ENCODE measurements at regions of chr12 and their contacts with region 1.

Region 1: DNA sequence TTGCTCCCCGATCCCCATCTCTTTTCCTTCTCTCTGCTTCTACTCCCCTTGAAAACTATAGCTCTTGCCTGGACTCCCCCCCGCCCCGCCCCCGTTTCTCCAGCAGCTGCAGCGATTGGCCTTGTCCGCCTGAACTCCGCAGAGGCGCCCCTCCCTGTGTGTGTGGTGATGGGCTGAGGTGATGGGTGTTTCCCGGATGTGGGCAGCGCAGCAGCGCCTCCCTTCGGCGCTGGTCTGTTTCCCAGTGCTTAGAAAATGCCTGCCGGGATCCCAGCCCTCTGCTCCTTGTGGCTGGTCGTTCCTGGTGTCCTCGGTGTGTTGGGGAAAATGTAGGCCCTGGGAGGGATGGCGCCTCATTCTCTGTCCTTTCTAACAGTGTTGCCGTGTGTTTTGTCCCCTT is 43.3 kb downstream of the GALNT8 start:
- DNase-seq: peak in 1 of 14 experiments; percentile 28
- ATAC-seq: no peak
- H3K4me3 ChIP-seq: no peak overlapping the region
- H3K4me3 Mint-ChIP-seq: no peak overlapping the region
- H3K27ac ChIP-seq: no peak overlapping the region
- H3K27ac Mint-ChIP-seq: no peak overlapping the region
- H3K4me1 ChIP-seq: no peaks in the 10 kb centered on the region
- H3K4me1 Mint-ChIP-seq: no peaks in the 10 kb centered on the region
- H3K27me3 ChIP-seq: no peaks in the 10 kb centered on the region
- H3K27me3 Mint-ChIP-seq: no peaks in the 10 kb centered on the region
- CTCF ChIP-seq: no peak

Region 2: GRCh38 chr12:4579305-4580102 is 184.0 kb before region 1 on chr12:
- CTCF ChIA-PET with region 1: no interaction called
- POLR2A ChIA-PET with region 1: no interaction called
- intact Hi-C with region 1: loop called in 1 of 2 experiments (anchors 2 kb)
- DNase-seq: peak in 4 of 14 experiments; percentile 6 to 39 (median 23)
- ATAC-seq: no peak
- H3K4me3 ChIP-seq: no peak overlapping the region
- H3K4me3 Mint-ChIP-seq: no peak overlapping the region
- H3K27ac ChIP-seq: no peak overlapping the region
- H3K27ac Mint-ChIP-seq: no peak overlapping the region
- H3K4me1 ChIP-seq: no peaks in the 10 kb centered on the region
- H3K4me1 Mint-ChIP-seq: no peaks in the 10 kb centered on the region
- H3K27me3 ChIP-seq: peaks cover 0 to 6% of the 10 kb centered on the region in 2 experiments
- H3K27me3 Mint-ChIP-seq: no peaks in the 10 kb centered on the region
- CTCF ChIP-seq: peak; percentile 4

Region 3: GRCh38 chr12:4604684-4605193 is 158.8 kb before region 1 on chr12:
- CTCF ChIA-PET with region 1: no interaction called
- POLR2A ChIA-PET with region 1: no interaction called
- intact Hi-C with region 1: loop called in 1 of 2 experiments (anchors 1 kb)
- DNase-seq: peak; percentile 65 to 88 (median 70)
- ATAC-seq: peak; percentile 96
- H3K4me3 ChIP-seq: peak overlapping the region; percentile 72
- H3K4me3 Mint-ChIP-seq: peak overlapping the region; percentile 89
- H3K27ac ChIP-seq: no peak overlapping the region
- H3K27ac Mint-ChIP-seq: peak overlapping the region; percentile 80
- H3K4me1 ChIP-seq: peaks cover 4% of the 10 kb centered on the region
- H3K4me1 Mint-ChIP-seq: peaks cover 40% of the 10 kb centered on the region
- H3K27me3 ChIP-seq: no peaks in the 10 kb centered on the region
- H3K27me3 Mint-ChIP-seq: peaks cover 7% of the 10 kb centered on the region
- CTCF ChIP-seq: peak; percentile 99

Region 4: GRCh38 chr12:4700621-4701026 is 62.9 kb before region 1 on chr12:
- CTCF ChIA-PET with region 1: no interaction called
- POLR2A ChIA-PET with region 1: no interaction called
- intact Hi-C with region 1: no loop called
- DNase-seq: no peak
- ATAC-seq: no peak
- H3K4me3 ChIP-seq: no peak overlapping the region
- H3K4me3 Mint-ChIP-seq: no peak overlapping the region
- H3K27ac ChIP-seq: no peak overlapping the region
- H3K27ac Mint-ChIP-seq: no peak overlapping the region
- H3K4me1 ChIP-seq: no peaks in the 10 kb centered on the region
- H3K4me1 Mint-ChIP-seq: no peaks in the 10 kb centered on the region
- H3K27me3 ChIP-seq: peaks cover 0 to 4% of the 10 kb centered on the region in 2 experiments
- H3K27me3 Mint-ChIP-seq: no peaks in the 10 kb centered on the region
- CTCF ChIP-seq: no peak

Region 5: DNA sequence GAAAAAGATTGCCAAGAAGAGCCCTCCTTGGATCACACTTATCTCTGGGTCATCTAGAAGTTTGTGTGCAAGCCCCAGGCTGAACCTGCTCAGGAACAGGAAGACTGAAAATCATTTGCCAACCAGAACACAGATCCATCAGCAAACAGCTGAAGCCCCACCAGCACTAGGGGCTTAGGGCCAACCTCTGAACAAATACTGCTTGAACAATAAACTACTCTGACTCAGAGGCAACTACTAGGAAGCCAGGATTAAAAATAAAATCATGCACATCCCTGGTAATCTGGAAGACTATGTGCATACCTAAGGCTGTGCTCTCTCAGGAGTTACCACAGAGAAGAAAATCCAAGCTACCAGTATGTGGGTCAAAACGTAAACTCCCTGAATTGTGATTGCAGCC is 27.5 kb before region 1 on chr12:
- CTCF ChIA-PET with region 1: no interaction called
- POLR2A ChIA-PET with region 1: no interaction called
- intact Hi-C with region 1: no loop called
- DNase-seq: no peak
- ATAC-seq: no peak
- H3K4me3 ChIP-seq: no peak overlapping the region
- H3K4me3 Mint-ChIP-seq: no peak overlapping the region
- H3K27ac ChIP-seq: no peak overlapping the region
- H3K27ac Mint-ChIP-seq: no peak overlapping the region
- H3K4me1 ChIP-seq: no peaks in the 10 kb centered on the region
- H3K4me1 Mint-ChIP-seq: no peaks in the 10 kb centered on the region
- H3K27me3 ChIP-seq: peaks cover 0 to 9% of the 10 kb centered on the region in 2 experiments
- H3K27me3 Mint-ChIP-seq: peaks cover 24% of the 10 kb centered on the region
- CTCF ChIP-seq: no peak

Region 6: GRCh38 chr12:4780641-4781625 is 17.4 kb after region 1 on chr12:
- CTCF ChIA-PET with region 1: no interaction called
- POLR2A ChIA-PET with region 1: no interaction called
- intact Hi-C with region 1: no loop called
- DNase-seq: no peak
- ATAC-seq: no peak
- H3K4me3 ChIP-seq: no peak overlapping the region
- H3K4me3 Mint-ChIP-seq: no peak overlapping the region
- H3K27ac ChIP-seq: no peak overlapping the region
- H3K27ac Mint-ChIP-seq: no peak overlapping the region
- H3K4me1 ChIP-seq: no peaks in the 10 kb centered on the region
- H3K4me1 Mint-ChIP-seq: no peaks in the 10 kb centered on the region
- H3K27me3 ChIP-seq: no peaks in the 10 kb centered on the region
- H3K27me3 Mint-ChIP-seq: peaks cover 24% of the 10 kb centered on the region
- CTCF ChIP-seq: no peak